Panc1 (cell line): ENCODE measurements at regions of chr19 and their contacts with region 1.

Region 1: GRCh38 chr19:16111160-16111908 is at the start of gene RAB8A:
- DNase-seq: peak; percentile 80
- ATAC-seq: peak; percentile 99
- H3K4me3 ChIP-seq: peak within 1 kb of the TSS; percentile 79 to 95
- H3K27ac ChIP-seq: peak within 1 kb of the TSS; percentile 92
- H3K4me1 ChIP-seq: peaks cover 5% of the 10 kb centered on the region; the same call in 1 of the 2 replicates
- H3K27me3 ChIP-seq: no peaks in the 10 kb centered on the region
- CTCF ChIP-seq: peak; percentile 90
- total RNA-seq, gene RAB8A: 75.8 TPM

Region 2: DNA sequence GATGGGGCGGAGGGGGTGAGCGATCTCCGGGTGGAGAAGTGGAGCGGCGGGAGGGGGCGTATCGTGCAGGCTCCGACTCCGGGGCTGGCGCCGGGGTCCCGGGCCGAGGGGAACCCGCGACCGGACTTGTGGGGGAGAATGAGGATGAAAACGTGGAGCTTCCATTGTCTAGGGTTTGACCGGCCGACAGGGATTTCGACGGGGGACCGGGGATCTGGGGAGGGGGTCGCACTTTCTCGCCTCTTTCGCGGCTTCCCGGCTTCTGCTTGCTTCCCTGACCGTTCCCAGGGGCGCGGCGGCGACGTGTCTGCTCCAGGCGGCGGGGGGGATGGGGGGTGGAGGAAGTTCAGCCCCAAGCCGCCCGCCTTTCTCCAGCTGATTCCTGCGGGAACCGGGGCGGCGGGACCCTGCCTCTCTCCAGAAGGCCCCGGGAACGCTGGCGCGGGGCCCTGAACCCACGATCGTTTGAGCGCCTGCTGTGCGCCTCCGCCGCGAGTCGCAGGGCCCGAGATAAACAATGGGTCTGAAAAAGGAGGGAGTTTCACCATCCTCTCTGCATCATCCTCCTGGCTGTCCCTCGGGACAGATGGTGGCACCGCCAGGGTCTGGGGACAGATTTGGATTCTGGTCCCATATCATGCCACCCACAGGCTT is 34.2 kb before region 1 on chr19:
- CTCF ChIA-PET with region 1: no interaction called
- POLR2A ChIA-PET with region 1: interaction called, 12 read pairs
- in situ Hi-C with region 1: no loop called
- intact Hi-C with region 1: no loop called
- DNase-seq: no peak
- ATAC-seq: no peak
- H3K4me3 ChIP-seq: peak overlapping the region; percentile 63 to 91
- H3K27ac ChIP-seq: peak overlapping the region; percentile 83
- H3K4me1 ChIP-seq: peaks cover 18% of the 10 kb centered on the region
- H3K27me3 ChIP-seq: no peaks in the 10 kb centered on the region
- CTCF ChIP-seq: no peak

Region 3: GRCh38 chr19:16125737-16126495 is 14.6 kb after region 1 on chr19:
- CTCF ChIA-PET with region 1: no interaction called
- POLR2A ChIA-PET with region 1: no interaction called
- in situ Hi-C with region 1: no loop called
- intact Hi-C with region 1: no loop called
- DNase-seq: no peak
- ATAC-seq: 0 out of 2 replicates have a peak, but pooled peaks have one; percentile 18
- H3K4me3 ChIP-seq: no peak overlapping the region
- H3K27ac ChIP-seq: no peak overlapping the region
- H3K4me1 ChIP-seq: no peaks in the 10 kb centered on the region
- H3K27me3 ChIP-seq: no peaks in the 10 kb centered on the region
- CTCF ChIP-seq: no peak

Region 4: DNA sequence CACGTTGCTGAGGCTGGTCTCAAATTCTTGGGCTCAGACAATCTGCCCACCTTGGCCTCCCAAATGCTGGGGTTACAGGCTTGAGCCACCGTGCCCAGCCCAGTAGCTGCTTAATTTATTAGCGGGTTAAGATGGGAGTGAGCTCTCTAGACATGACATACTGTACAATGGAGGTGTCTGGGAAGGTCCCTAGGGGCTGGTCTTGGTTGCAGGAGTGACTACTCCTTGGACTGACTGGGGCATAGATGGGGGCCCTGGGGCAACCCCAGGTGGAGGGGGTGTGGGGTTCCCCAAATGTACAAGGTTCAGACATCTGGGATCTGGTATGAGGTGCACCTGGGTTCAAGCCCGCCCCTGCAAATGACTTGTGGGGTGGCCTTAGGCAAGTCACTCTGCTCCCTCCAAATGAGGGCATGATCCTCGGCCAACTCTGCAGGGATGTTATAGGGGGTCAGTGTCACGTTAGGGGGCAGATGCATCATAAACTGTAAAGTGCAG is 49.2 kb after region 1 on chr19:
- CTCF ChIA-PET with region 1: interaction called, 12 read pairs
- POLR2A ChIA-PET with region 1: no interaction called
- in situ Hi-C with region 1: no loop called
- intact Hi-C with region 1: no loop called
- DNase-seq: no peak
- ATAC-seq: no peak
- H3K4me3 ChIP-seq: no peak overlapping the region
- H3K27ac ChIP-seq: no peak overlapping the region
- H3K4me1 ChIP-seq: peaks cover 2% of the 10 kb centered on the region; the same call in 1 of the 2 replicates
- H3K27me3 ChIP-seq: no peaks in the 10 kb centered on the region
- CTCF ChIP-seq: no peak